ENCODE measurements at regions of chrX and their contacts with region 1.

Region 1: GRCh38 chrX:153971450-153972367 is at the start of gene HCFC1:
- DNase-seq: peak; percentile 85 to 93
- ATAC-seq: peak; percentile 50 to 71 (median 56)
- H3K4me3 ChIP-seq: peak within 1 kb of the TSS; percentile 97
- H3K4me3 Mint-ChIP-seq: peak within 1 kb of the TSS; percentile 100
- H3K27ac ChIP-seq: peak within 1 kb of the TSS; percentile 100
- H3K27ac Mint-ChIP-seq: peak within 1 kb of the TSS; percentile 99 to 100
- H3K4me1 ChIP-seq: peaks cover 50% of the 10 kb centered on the region
- H3K4me1 Mint-ChIP-seq: peaks cover 39 to 40% of the 10 kb centered on the region in 2 donors
- H3K27me3 ChIP-seq: no peaks in the 10 kb centered on the region
- H3K27me3 Mint-ChIP-seq: no peaks in the 10 kb centered on the region
- CTCF ChIP-seq: no peak
- total RNA-seq, gene HCFC1: 65.2 to 76.7 (median 67.5) TPM

Region 2: DNA sequence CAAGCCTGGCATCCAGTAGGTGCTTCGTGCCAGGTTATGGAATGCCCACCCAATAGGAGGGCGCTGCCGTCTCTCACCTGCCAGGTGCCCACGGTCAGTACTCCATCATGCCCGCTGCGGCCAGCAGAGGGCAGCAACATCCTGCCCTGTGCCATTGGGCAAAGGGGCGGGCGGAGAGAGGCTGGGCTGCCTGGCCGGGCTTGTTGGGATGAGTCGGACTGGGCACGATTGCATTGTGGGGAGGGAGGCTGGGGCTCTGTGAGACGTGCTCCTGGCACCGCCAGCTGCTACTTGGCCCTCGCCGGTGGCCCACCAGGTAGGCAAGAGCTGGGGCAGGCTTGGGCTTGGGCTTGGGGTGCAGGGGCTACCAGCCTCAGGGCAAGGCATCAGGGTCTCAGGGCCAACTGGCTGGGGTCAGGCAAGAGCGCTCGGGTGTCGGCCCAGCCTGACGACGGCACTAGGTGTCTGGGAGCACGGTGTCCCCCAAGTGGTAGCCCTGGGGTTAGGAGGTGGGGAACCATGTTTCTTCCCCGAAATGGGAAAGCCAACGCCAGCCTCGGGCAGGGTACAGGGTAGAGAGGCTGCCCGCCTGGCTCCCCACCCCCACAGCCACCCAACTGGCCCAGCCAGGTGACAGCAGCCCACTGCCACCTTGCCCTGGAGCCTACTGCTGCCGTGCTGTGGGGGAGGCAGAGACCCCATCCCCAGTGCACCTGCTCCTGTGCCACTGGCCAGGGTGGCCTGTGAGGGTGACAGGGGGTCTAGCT is 207.5 kb before region 1 on chrX and contains the start of gene PLXNB3:
- intact Hi-C with region 1: loop called (anchors 5 kb)
- DNase-seq: peak; percentile 67 to 84
- ATAC-seq: peak; percentile 88 to 94 (median 93)
- H3K4me3 ChIP-seq: no peak within 1 kb of the TSS
- H3K4me3 Mint-ChIP-seq: no peak within 1 kb of the TSS
- H3K27ac ChIP-seq: no peak within 1 kb of the TSS
- H3K27ac Mint-ChIP-seq: no peak within 1 kb of the TSS
- H3K4me1 ChIP-seq: peaks cover 18% of the 10 kb centered on the region
- H3K4me1 Mint-ChIP-seq: peaks cover 0 to 20% of the 10 kb centered on the region in 2 donors
- H3K27me3 ChIP-seq: no peaks in the 10 kb centered on the region
- H3K27me3 Mint-ChIP-seq: no peaks in the 10 kb centered on the region
- CTCF ChIP-seq: peak; percentile 64
- total RNA-seq, gene PLXNB3: 1.2 to 1.3 TPM in 2 of 3 donors, not detected in the other

Region 3: DNA sequence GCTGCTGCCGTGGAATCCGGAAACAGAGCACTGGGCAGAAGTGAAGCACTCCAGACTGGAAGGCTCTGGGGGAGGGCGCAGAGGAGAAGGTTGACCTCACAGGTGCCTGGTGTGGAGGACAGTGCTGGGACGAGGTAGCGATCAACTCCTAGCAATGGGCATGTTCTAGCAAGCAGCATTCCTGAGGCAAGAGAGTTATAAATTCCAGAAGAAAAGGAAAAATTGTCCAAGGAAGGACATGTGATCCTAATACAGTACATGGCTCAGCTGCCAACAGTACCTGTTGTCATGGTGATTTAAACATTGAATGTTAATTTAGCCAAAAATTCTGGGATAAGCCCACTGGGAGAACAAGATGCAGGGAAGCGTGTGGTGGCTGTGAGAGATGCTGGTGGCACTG is 53.8 kb before region 1 on chrX:
- intact Hi-C with region 1: no loop called
- DNase-seq: no peak
- ATAC-seq: no peak
- H3K4me3 ChIP-seq: no peak overlapping the region
- H3K4me3 Mint-ChIP-seq: no peak overlapping the region
- H3K27ac ChIP-seq: no peak overlapping the region
- H3K27ac Mint-ChIP-seq: no peak overlapping the region
- H3K4me1 ChIP-seq: peaks cover 22% of the 10 kb centered on the region
- H3K4me1 Mint-ChIP-seq: peaks cover 15 to 16% of the 10 kb centered on the region in 2 donors
- H3K27me3 ChIP-seq: no peaks in the 10 kb centered on the region
- H3K27me3 Mint-ChIP-seq: no peaks in the 10 kb centered on the region
- CTCF ChIP-seq: no peak

Region 4: GRCh38 chrX:154000051-154000450 is 28.3 kb after region 1 on chrX:
- intact Hi-C with region 1: loop called (anchors 2 kb)
- DNase-seq: no peak
- ATAC-seq: no peak
- H3K4me3 ChIP-seq: no peak overlapping the region
- H3K4me3 Mint-ChIP-seq: no peak overlapping the region
- H3K27ac ChIP-seq: no peak overlapping the region
- H3K27ac Mint-ChIP-seq: no peak overlapping the region
- H3K4me1 ChIP-seq: peaks cover 22% of the 10 kb centered on the region
- H3K4me1 Mint-ChIP-seq: peaks cover 17 to 18% of the 10 kb centered on the region in 2 donors
- H3K27me3 ChIP-seq: no peaks in the 10 kb centered on the region
- H3K27me3 Mint-ChIP-seq: peaks cover 0 to 7% of the 10 kb centered on the region in 2 donors
- CTCF ChIP-seq: no peak

Region 5: GRCh38 chrX:154369449-154370299 is 398.0 kb after region 1 on chrX:
- intact Hi-C with region 1: loop called (anchors 2 kb)
- DNase-seq: peak; percentile 67 to 81
- ATAC-seq: peak; percentile 3 to 36 (median 9)
- H3K4me3 ChIP-seq: peak overlapping the region; percentile 97
- H3K4me3 Mint-ChIP-seq: peak overlapping the region; percentile 90
- H3K27ac ChIP-seq: peak overlapping the region; percentile 100
- H3K27ac Mint-ChIP-seq: peak overlapping the region; percentile 95 to 97
- H3K4me1 ChIP-seq: peaks cover 69% of the 10 kb centered on the region
- H3K4me1 Mint-ChIP-seq: peaks cover 19 to 36% of the 10 kb centered on the region in 2 donors
- H3K27me3 ChIP-seq: no peaks in the 10 kb centered on the region
- H3K27me3 Mint-ChIP-seq: no peaks in the 10 kb centered on the region
- CTCF ChIP-seq: no peak

Measured in natural killer cell (primary cell).